PC-3 (cell line): ENCODE measurements at regions of chr6 and their contacts with region 1.

Region 1: DNA sequence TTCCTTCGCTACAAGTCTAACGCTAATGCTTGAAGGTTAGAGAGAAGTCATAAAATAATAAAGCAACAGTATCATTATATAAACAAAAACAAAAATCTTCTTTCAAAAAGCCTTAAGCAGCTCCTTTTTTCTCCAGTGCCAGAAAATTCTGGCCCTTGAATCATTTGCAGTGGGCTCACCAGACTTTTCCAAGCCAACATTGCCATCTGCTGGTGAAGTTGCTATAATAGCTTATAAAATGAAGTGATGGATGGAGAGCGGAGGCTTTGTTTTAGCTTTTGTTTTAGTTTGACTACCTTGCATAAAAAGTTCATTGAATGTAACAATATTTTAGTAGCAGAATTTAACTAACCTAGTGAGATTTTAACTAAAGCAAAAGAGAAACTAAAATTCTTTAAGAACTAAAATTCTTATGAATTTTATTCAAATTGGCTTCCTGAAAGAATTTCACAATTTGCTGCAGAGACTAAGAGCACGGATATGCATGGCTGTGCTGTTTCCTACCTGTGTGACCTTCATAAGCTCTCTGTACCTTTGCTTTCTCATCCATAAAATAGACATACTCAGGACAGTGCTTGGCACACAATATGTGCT is 44.8 kb upstream of the SLC2A12 start:
- DNase-seq: peak; percentile 78
- ATAC-seq: peak; percentile 50; the same call in 1 of the 2 replicates
- H3K4me3 ChIP-seq: no peak overlapping the region
- H3K27ac ChIP-seq: no peak overlapping the region
- H3K4me1 ChIP-seq: peaks cover 4% of the 10 kb centered on the region; the same call in 1 of the 2 replicates
- H3K27me3 ChIP-seq: no peaks in the 10 kb centered on the region
- CTCF ChIP-seq: peak; percentile 74

Region 2: DNA sequence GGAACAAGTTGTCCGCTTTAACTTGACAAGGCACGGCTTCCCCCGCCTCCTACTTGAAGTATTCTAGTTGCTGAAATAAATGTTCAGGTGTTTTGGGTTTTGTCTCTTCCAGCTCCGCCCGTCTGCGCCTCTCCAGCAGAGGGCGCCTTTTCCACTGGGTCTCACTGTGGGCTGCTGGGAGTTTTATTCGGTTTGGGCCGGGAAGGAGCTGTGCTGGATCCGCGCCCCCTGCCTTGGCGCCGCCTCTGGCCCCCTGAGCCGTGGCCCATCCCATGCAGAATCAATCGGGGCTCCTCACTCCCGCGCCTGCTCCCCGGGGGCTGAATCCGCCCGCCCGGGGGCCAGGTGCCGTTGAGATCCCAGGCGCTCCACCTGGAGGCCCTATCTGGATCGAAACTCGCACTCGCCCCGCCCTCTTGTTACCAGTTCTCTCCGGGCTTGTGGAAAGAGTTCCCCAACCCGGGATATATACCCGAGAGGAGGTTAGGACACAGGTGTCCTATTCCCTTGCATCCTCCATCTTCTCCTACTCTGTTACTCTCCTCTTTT is 259.3 kb before region 1 on chr6:
- CTCF ChIA-PET with region 1: interaction called, 3 read pairs
- POLR2A ChIA-PET with region 1: no interaction called
- intact Hi-C with region 1: loop called (anchors 2 kb)
- DNase-seq: peak; percentile 77
- ATAC-seq: peak; percentile 94
- H3K4me3 ChIP-seq: peak overlapping the region; percentile 81
- H3K27ac ChIP-seq: peak overlapping the region; percentile 70
- H3K4me1 ChIP-seq: no peaks in the 10 kb centered on the region
- H3K27me3 ChIP-seq: no peaks in the 10 kb centered on the region
- CTCF ChIP-seq: peak; percentile 94

Region 3: DNA sequence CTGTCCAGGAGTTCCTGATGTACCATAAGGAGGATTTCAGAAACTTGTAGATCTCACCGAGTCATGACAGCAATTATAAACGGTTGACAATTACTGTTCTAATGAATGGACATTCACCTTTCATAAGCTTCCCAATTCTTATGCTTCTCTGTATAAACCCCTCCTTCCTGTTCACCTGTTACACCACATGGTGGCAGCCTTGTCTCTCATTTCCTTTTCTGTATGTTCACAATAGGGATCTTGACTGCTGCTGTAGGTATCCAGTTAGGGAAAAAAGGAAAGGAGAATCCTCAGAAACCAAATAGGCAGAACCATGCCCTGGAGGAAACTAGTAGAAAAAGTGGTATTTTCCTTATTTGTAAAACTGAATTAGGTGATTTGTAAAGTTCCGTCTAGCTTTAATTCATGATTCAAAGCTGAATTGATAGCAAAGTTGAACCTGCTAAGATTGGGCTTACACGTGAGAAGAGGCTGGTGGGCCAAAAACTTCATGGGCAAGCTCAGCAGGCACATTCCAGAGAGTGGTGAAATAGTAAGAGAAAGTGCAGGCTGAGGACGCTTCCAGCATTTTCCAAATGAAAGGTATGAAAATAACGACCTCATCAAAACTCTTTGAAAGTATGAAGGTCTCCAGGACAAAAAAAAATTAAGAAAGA is 173.1 kb before region 1 on chr6:
- CTCF ChIA-PET with region 1: interaction called, 52 read pairs
- POLR2A ChIA-PET with region 1: no interaction called
- intact Hi-C with region 1: loop called (anchors 1 kb)
- DNase-seq: peak; percentile 76
- ATAC-seq: peak; percentile 88
- H3K4me3 ChIP-seq: no peak overlapping the region
- H3K27ac ChIP-seq: no peak overlapping the region
- H3K4me1 ChIP-seq: no peaks in the 10 kb centered on the region
- H3K27me3 ChIP-seq: no peaks in the 10 kb centered on the region
- CTCF ChIP-seq: peak; percentile 88

Region 4: DNA sequence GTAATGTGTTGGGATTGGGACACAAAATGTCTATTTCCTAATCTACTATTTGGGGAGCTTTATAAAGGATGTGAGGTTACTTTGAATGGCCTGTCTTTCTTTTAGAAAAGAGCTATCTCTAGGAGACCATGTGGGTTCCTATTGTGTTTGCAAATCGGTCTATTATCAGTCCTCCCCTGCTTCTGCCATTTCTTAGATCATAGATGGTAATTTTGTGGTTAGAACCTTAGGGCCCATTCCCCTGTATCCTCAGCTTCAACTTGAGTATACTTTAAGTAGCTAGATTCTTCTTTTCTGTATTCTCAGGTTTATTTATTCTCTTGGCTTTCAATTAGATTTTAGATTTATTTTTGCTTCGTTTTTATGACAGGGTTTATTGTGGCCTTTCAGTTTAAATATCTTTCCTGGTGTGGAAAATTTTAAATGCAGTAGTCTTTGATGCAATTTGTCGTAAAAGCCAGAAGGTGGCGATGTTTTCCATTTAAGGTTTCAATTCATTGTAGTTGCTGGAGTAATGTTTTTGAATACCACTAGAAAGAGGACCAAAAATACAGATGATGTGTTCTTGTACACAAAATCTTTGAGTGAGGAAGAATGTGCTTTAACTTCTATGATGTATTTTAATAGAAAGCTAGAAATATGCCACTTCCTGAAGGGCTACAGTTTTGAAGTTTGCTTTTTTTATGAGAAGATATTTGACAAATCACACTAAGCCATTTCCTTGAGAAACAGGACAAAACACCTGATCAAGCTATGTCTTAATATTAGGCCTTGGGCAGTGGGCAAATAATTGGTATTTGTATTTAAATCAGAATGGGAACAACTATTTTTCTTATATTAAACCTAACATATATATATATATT is 123.9 kb before region 1 on chr6:
- CTCF ChIA-PET with region 1: interaction called, 3 read pairs
- POLR2A ChIA-PET with region 1: no interaction called
- intact Hi-C with region 1: loop called (anchors 1 kb)
- DNase-seq: peak; percentile 68
- ATAC-seq: no peak
- H3K4me3 ChIP-seq: no peak overlapping the region
- H3K27ac ChIP-seq: no peak overlapping the region
- H3K4me1 ChIP-seq: peaks cover 19% of the 10 kb centered on the region
- H3K27me3 ChIP-seq: no peaks in the 10 kb centered on the region
- CTCF ChIP-seq: peak; percentile 80

Region 5: GRCh38 chr6:134166511-134167261 is 69.5 kb after region 1 on chr6:
- CTCF ChIA-PET with region 1: no interaction called
- POLR2A ChIA-PET with region 1: no interaction called
- intact Hi-C with region 1: no loop called
- DNase-seq: peak; percentile 25
- ATAC-seq: peak; percentile 71
- H3K4me3 ChIP-seq: no peak overlapping the region
- H3K27ac ChIP-seq: no peak overlapping the region
- H3K4me1 ChIP-seq: peaks cover 11% of the 10 kb centered on the region
- H3K27me3 ChIP-seq: no peaks in the 10 kb centered on the region
- CTCF ChIP-seq: no peak